ENCODE measurements at regions of chr2 and their contacts with region 1.

Region 1: DNA sequence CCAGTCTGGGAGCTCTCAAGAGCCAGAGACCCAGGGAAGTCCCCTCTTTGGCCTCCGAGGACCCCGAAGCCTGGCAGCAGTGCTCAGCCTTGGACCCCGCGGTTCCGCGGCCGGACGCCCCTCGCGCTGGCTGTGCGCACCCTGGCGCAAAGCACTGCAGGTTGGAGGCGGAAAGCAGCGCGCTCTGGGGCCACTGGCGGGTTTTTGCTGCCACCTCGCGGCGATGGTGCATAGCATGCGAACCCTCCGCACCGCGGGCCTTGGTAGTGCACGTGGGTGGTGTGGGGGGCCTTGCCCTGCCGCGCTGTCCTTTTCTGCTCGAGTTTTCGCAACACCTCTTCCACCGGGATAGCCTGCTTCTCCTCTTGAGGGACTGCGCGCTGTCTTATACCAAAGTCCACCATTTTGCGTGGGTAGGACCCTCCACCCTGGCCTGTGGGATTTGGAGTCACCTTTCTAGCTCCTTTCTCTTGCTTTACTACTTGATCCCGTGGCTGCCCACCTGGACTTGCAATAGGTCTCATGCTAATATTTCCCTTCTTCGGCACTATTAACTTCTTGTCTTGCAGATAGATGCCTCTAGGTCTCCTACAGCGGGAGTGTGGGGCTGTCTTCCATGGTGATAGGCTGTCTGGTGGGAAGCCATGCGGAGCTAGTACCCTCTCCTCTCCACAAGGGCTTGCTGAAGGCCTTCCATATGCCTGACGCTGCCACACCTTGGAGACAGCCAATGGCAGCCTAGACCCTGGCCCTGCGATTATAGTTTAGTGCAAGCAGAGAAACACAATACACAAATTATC is 14.3 kb downstream of the SIX3 start:
- DNase-seq: peak; percentile 81
- ATAC-seq: peak; percentile 86
- H3K4me3 Mint-ChIP-seq: peak overlapping the region; percentile 9
- H3K27ac Mint-ChIP-seq: no peak overlapping the region
- H3K4me1 Mint-ChIP-seq: peaks cover 22% of the 10 kb centered on the region
- H3K27me3 Mint-ChIP-seq: peaks cover 59% of the 10 kb centered on the region

Region 2: DNA sequence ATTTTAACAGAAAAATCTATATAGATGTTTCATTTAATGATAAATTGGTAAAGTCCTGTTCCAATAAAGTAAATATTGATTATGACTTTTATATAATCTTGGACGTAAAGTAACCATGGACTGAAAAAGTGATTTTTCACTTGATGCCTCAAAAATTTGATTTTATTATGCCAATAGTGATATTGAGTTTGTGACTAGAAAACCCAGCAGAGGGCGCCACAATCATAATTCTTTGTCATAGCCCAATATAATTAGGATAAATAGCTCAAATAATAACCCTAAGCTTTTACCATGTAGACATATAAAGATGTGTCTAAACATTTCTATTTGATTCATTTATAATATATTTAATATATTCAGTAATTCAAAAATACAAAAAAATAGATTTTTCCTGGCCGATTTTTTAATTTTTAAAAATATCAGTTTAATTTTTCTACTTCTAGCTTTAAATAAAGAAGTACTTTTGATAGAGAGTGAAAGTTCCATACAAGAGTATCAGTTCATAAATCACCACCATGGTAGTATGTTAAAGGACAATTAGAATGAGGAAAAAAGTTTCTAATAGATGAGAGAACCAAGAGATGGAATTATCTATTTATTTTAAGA is 563.4 kb before region 1 on chr2:
- CTCF ChIA-PET with region 1: interaction called, 40 read pairs
- POLR2A ChIA-PET with region 1: no interaction called
- DNase-seq: peak; percentile 61
- ATAC-seq: no peak
- H3K4me3 Mint-ChIP-seq: no peak overlapping the region
- H3K27ac Mint-ChIP-seq: no peak overlapping the region
- H3K4me1 Mint-ChIP-seq: no peaks in the 10 kb centered on the region
- H3K27me3 Mint-ChIP-seq: no peaks in the 10 kb centered on the region

Region 3: DNA sequence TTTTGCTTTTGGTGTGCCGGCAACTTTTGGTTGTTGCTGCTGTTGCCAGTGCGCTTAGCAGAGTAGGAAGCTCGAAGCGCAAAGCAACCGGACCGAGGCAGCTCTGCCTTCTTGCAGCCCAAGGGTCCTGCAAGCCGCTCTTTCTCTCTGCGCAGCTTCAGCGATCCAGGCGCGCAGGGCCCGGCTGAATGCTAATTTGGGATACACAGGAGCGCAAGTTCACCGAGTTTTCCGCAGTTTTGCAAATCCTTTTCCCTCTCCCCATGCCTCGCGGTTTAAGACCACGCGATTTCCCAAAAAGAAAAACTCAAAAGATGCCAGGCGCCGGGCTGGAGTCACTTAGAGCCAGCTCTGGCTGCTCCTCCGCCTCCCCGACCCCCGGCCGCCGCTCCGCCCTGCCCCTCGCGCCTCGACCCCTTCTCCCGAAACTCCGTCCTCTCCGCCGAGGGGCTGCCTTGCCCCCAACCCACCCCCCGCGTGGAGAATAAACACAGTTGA is 27.8 kb before region 1 on chr2:
- CTCF ChIA-PET with region 1: interaction called, 11 read pairs
- POLR2A ChIA-PET with region 1: no interaction called
- DNase-seq: no peak
- ATAC-seq: no peak
- H3K4me3 Mint-ChIP-seq: no peak overlapping the region
- H3K27ac Mint-ChIP-seq: no peak overlapping the region
- H3K4me1 Mint-ChIP-seq: peaks cover 14% of the 10 kb centered on the region
- H3K27me3 Mint-ChIP-seq: peaks cover 73% of the 10 kb centered on the region

Region 4: GRCh38 chr2:45009928-45010701 is 54.3 kb after region 1 on chr2:
- CTCF ChIA-PET with region 1: no interaction called
- POLR2A ChIA-PET with region 1: no interaction called
- DNase-seq: no peak
- ATAC-seq: no peak
- H3K4me3 Mint-ChIP-seq: no peak overlapping the region
- H3K27ac Mint-ChIP-seq: no peak overlapping the region
- H3K4me1 Mint-ChIP-seq: peaks cover 30% of the 10 kb centered on the region
- H3K27me3 Mint-ChIP-seq: peaks cover 83% of the 10 kb centered on the region

Region 5: DNA sequence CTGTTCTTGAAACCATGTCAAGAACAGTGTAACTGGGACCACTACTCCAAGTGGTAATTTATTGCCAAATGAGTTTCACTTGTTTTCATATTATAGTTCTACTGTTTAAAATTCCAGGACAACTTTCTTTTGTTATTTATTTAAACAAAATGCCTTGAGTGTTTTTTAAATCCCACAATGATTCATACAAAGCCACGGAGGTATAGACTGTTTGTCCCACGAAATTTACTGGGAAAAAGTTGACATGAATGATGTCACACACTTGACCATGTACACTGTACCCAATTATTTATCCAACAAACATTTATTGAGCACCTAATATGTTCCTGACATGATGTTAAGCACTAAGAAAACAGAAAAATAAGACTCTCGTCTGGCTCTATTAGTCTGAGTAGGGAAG is 297.4 kb after region 1 on chr2:
- CTCF ChIA-PET with region 1: no interaction called
- POLR2A ChIA-PET with region 1: no interaction called
- DNase-seq: no peak
- ATAC-seq: no peak
- H3K4me3 Mint-ChIP-seq: no peak overlapping the region
- H3K27ac Mint-ChIP-seq: no peak overlapping the region
- H3K4me1 Mint-ChIP-seq: no peaks in the 10 kb centered on the region
- H3K27me3 Mint-ChIP-seq: peaks cover 16% of the 10 kb centered on the region

Measured in activated CD8-positive, alpha-beta T cell treated with anti-CD3 and anti-CD28 coated beads, Interleukin-2, amount 10 ng/mL, durations not matched to agents 7 days and 5 days (primary cell).